OCI-LY7 (cell line): ENCODE measurements at regions of chr3 and their contacts with region 1.

Region 1: GRCh38 chr3:10344147-10344943 is 23.4 kb upstream of the SEC13 start:
- DNase-seq: peak; percentile 78
- H3K4me3 ChIP-seq: no peak overlapping the region
- H3K27ac ChIP-seq: no peak overlapping the region
- H3K4me1 ChIP-seq: peaks cover 14% of the 10 kb centered on the region
- CTCF ChIP-seq: peak; percentile 99

Region 2: GRCh38 chr3:10026084-10026890 is 318.1 kb before region 1 on chr3 and contains the start of gene FANCD2:
- CTCF ChIA-PET with region 1: no interaction called
- POLR2A ChIA-PET with region 1: no interaction called
- intact Hi-C with region 1: no loop called
- DNase-seq: peak; percentile 90
- H3K4me3 ChIP-seq: peak within 1 kb of the TSS; percentile 98
- H3K27ac ChIP-seq: peak within 1 kb of the TSS; percentile 82
- H3K4me1 ChIP-seq: peaks cover 22% of the 10 kb centered on the region
- CTCF ChIP-seq: no peak
- total RNA-seq, gene FANCD2: 112 and 116 TPM in 2 replicates

Region 3: DNA sequence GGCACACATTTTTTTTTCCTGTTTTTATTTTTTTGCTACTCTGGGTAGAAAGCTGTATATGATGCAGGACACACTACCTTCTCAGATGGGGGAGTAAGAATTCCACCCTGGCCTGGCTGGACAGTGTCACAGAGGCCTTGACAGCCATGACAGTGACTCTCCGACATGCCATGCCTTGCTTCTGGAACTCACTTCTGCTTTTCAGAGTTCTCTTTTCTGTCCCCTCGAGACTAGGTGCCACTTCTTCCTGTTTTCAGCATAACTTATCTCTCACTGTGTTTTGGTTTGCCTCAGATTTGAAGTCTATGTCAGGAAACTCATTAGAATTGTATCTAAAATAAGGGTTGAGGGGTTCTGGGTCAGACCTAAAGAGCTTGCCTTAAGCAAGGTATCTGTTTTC is 45.6 kb after region 1 on chr3:
- CTCF ChIA-PET with region 1: interaction called, 3 read pairs
- POLR2A ChIA-PET with region 1: no interaction called
- intact Hi-C with region 1: loop called (anchors 2 kb)
- DNase-seq: peak; percentile 94
- H3K4me3 ChIP-seq: peak overlapping the region; percentile 41
- H3K27ac ChIP-seq: peak overlapping the region; percentile 97
- H3K4me1 ChIP-seq: peaks cover 96% of the 10 kb centered on the region
- CTCF ChIP-seq: no peak

Region 4: GRCh38 chr3:10522646-10523303 is 178.4 kb after region 1 on chr3:
- CTCF ChIA-PET with region 1: interaction called, 4 read pairs
- POLR2A ChIA-PET with region 1: no interaction called
- intact Hi-C with region 1: loop called (anchors 2 kb)
- DNase-seq: peak; percentile 33
- H3K4me3 ChIP-seq: no peak overlapping the region
- H3K27ac ChIP-seq: no peak overlapping the region
- H3K4me1 ChIP-seq: no peaks in the 10 kb centered on the region
- CTCF ChIP-seq: peak; percentile 46

Region 5: DNA sequence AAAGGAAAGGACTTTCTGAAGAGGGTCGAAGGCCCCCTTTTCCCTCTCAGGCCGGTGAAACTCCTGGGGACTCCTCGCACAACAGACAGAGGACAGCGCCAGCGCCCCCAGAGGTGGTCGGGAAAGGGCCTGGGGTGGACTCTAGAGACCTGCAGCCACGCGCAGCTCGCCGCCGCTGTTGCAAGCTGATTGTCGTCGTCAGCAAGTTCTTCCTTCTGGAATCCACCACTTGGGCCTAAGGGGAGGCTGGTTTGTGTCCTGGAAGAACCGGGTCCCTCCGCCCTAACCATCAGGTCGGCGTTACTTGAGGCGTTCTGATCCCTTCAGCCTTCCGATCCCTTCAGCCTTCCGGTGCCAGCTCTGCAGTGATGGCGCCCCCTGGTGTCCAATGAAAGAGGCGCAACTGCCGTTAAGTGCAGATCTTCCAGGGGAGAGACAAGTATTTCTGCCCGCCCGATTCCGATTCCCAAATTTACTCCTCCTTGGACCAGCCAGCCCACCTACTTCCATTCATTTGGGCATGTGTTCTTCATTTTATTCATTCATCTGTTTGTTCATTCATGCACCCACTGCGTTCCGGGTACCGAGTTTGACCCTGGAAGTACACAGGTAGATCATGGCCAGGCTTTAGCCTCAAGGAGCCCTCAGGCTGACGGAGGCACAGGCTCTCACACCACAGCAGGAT is 394.5 kb after region 1 on chr3:
- CTCF ChIA-PET with region 1: interaction called, 6 read pairs
- POLR2A ChIA-PET with region 1: no interaction called
- intact Hi-C with region 1: loop called (anchors 1 kb)
- DNase-seq: peak; percentile 70
- H3K4me3 ChIP-seq: peak overlapping the region; percentile 59
- H3K27ac ChIP-seq: no peak overlapping the region
- H3K4me1 ChIP-seq: no peaks in the 10 kb centered on the region
- CTCF ChIP-seq: peak; percentile 90